Left cardiac atrium (tissue), 4 donors: ENCODE measurements at regions of chr12 and their contacts with region 1.

Region 1: GRCh38 chr12:109763201-109763841 is 49.7 kb downstream of the FAM222A start:
- DNase-seq: no peak
- ATAC-seq: no peak

Region 2: DNA sequence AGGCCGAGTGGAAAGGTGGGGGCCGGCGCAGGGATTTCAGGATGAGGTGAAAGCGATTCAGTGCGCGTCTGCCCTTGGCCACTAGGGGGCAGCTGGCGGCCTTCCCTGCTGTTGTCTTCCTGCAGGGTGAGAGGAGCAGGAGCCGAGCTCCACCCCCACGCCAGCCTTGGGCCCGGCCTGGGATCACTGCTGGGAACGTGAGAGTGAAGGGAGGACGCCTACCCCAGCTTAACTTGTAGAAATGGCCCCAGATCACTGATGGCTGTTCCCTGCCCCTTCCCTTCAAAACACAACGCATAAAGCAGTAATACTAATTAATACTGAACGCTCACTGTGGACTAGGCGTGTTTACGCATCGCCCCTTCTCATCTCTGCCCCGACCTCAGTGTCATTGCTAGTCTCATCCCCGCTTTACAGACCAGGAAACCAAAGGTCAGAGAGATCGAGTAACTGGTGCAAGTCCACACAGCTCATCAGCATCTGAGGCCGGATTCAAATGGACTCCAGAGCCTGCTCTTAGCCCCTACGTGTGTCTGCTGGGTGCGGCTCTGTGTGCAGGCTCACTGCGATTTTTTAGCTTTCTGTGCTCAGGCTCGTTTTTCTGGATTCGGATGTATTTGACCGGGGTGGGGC is 165.4 kb before region 1 on chr12:
- intact Hi-C with region 1: loop called in 1 of 2 experiments (anchors 5 kb)
- DNase-seq: peak; percentile 90
- ATAC-seq: peak; percentile 94 to 95

Region 3: DNA sequence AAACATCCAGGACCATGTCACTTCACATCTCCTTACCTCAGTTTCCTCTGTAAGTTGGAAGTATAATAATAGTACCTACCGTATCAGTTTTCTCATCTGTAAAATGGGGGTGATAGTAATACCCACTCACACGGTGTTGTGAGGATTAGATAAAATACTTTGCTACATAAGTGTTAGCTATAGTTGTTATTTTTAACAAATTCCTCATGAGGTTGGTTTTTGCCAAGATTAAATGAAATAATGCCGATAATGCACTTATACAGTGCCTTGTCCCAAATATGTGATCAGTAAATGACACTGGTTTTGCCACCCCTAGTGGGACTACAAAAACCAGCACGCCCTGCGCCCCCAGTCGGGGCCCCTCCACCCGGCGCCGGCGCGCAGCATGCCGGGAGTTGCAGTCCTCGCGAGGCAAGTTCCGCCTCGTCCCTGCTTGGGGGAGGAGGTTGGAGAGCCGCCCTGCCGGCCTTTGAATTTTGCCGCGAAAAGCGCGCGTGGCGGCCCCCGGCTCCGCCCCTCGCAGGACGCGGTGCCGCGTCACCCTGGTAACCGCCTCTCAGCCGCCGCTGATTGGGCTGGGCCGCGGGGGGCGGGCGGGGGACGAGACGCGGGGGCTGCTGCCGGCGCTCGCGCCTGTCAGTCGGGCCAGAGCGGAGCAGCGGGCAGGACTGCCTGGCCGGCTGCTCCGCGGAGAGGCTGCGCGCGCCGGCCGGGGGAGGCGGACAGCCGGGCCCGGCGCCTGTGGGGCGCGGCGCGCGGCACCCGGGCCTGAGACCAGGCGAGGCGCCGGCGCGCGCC is 49.9 kb before region 1 on chr12 and contains the start of gene FAM222A:
- intact Hi-C with region 1: no loop called
- DNase-seq: peak; percentile 98
- ATAC-seq: peak; percentile 95 to 96
- total RNA-seq, gene FAM222A: 14.5 to 21.8 TPM